Left colon (tissue), 2 donors: ENCODE measurements at regions of chr17 and their contacts with region 1.

Region 1: DNA sequence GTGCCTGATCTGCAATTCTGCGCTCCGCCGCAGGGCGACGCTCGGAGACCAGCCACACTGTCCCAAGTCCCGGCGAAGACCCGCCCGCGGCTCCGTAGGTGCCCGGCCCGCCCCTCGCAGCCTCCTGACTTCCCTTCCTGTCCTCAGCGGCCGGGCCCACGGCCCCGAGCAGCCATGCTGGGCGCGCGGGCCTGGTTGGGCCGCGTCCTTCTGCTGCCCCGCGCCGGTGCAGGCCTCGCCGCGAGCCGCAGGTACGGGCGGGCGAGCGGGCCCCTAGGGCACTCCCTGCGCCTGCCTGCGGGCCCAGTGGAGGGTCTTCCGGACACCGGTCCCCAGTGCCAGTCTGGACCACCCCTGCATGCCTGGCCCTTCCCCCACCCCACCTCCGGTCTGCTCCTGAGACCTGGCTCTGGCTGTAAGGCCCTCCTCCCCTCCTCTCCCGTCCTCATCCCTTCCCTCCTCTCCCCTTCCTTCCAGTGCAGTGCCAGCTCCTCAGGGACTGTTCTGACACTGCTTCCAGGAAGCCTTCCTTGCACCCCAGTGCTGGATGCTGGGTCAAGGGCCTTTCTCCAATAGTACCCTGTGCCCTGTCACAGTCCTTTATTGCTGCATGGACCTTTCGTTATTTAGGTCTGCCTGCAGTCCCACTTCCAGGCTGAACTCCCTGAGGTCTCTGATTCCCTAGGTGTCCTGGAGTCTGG is at the start of gene SPATA20:
- DNase-seq: peak; percentile 93 to 95
- ATAC-seq: peak; percentile 59
- total RNA-seq, gene SPATA20: 61.1 to 66.7 TPM

Region 2: DNA sequence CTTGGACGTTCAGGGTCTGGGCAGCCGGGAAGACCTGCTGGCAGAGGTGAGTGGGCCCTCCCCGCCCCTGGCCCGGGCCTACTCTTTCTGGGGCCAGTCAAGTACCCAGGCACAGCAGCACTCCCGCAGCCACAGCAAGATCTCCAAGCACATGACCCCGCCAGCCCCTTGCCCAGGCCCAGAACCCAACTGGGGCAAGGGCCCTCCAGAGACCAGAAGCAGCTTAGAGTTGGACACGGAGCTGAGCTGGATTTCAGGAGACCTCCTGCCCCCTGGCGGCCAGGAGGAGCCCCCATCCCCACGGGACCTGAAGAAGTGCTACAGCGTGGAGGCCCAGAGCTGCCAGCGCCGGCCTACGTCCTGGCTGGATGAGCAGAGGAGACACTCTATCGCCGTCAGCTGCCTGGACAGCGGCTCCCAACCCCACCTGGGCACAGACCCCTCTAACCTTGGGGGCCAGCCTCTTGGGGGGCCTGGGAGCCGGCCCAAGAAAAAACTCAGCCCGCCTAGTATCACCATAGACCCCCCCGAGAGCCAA is 78.9 kb after region 1 on chr17:
- intact Hi-C with region 1: loop called (anchors 5 kb)
- DNase-seq: peak in 1 of 2 donors; percentile 75
- ATAC-seq: no peak

Region 3: DNA sequence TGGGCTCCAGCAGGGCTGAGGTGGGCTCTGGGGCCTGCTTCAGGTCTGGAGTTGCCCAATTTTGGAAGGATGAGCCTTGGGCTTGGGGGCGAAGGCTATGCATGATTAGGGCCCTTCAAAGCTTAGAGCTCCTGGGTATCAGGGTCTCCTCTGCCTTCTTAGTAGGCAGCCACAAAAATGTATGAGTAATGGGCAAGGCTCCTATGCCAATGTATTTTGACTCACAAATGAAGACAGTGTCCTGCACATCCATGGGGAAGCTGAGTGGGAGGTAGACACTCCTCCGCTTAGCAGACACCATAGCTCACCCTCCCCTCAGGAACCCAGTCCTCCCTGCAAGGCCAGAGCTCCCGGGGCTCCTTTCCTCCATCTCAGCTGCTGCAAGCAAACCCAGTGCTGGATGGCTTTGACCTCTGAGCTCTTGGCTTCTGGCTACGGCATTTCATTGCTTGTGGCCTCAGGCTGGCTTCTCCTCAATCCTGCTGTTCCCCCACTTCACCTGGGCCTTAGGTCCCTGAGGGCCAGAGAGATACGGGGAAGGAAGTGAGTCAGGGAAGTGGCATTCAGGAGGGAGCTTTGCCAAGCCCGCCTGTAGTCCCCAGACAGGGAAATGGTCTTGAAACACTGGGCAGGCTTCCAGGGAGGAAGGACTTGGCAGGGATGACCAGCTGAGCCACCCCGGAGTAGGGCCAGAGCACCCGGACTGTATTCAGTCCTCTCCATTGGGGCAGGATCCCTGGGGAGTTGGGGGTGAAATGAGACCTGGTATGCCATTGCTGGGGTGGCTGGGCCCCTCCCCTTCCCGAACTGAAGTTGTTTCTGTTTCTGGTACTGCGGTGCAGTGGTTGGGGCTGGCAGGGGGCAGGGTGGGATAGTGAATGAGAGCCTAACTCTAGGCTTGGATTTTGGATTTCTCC is 91.9 kb after region 1 on chr17:
- intact Hi-C with region 1: loop called in 1 of 2 experiments (anchors 5 kb)
- DNase-seq: peak; percentile 95 to 98
- ATAC-seq: peak; percentile 69

Region 4: DNA sequence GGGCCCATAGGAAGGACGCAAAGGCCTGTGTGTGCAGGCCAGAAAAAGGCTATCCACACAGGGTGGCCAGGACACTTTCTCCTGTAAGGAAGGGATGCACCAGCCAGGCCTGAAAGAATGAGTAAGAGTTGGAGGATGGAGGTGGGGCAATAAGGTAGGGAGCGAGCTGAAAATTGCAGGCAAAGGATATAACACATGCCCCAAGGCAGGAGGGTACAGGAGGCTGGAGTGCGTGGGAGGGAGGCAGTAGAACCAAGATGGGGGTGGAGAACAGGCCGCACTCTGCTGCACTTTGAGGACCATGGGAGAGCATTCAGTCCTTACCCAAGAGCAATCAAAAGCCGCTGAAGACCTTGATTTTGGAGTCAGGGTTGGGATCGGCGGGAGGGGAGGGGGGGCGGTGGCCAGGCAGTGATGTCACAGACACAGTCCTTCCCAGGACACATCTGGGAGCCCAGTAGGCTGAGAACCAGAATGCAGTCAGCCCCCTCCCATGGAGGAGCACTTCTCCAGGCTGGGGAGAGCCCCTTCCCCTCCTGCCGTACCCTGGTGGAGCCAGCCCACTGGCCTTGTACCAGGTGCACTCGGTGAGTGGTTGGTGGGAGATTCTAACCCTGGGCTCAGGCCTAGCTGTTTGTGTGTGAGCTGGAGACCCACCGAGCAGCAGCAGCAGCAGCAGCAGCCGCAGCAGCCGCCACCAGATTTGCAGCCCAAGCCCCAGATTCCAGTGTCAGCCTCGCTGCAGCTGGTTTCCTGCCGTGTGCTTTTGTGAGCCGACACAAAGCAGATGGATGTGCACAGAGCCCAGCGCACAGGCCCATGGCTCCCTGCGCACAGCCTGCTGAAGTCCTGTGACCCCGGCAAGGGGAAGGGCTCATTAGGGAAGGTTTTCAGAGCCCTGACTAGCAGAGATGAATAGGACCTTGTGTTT is 143.0 kb after region 1 on chr17:
- intact Hi-C with region 1: loop called (anchors 5 to 10 kb)
- DNase-seq: no peak
- ATAC-seq: no peak

Region 5: DNA sequence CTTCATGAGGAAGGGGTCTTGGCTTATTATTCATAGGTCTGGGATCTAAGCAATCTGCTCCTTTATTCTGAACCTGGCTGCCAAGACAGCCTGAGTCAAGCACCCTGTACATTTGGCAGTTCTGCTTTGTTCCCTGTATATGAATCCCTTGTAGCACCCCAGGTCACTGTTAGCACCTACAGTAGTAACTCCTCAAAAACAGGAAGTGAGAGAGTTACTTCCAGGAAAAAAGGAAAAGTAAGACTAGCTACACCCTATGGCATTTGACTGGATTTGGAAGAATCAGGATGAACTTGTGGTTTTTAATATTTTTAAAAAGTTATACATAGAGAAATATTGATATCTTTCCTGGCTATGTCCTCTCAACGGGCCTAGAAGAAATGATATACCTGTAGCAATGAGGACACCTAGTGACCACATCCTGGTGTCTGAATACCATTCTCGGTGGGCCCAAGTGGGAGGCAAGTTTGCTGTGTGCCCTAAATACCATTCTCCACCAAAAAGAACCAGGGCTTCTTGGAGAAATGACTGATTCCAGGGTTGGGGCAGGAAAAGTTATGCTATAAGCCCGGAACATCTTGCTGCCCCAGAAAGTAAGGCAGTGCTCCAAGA is 150.6 kb after region 1 on chr17:
- intact Hi-C with region 1: loop called (anchors 5 to 10 kb)
- DNase-seq: no peak
- ATAC-seq: peak; percentile 16

Region 6: DNA sequence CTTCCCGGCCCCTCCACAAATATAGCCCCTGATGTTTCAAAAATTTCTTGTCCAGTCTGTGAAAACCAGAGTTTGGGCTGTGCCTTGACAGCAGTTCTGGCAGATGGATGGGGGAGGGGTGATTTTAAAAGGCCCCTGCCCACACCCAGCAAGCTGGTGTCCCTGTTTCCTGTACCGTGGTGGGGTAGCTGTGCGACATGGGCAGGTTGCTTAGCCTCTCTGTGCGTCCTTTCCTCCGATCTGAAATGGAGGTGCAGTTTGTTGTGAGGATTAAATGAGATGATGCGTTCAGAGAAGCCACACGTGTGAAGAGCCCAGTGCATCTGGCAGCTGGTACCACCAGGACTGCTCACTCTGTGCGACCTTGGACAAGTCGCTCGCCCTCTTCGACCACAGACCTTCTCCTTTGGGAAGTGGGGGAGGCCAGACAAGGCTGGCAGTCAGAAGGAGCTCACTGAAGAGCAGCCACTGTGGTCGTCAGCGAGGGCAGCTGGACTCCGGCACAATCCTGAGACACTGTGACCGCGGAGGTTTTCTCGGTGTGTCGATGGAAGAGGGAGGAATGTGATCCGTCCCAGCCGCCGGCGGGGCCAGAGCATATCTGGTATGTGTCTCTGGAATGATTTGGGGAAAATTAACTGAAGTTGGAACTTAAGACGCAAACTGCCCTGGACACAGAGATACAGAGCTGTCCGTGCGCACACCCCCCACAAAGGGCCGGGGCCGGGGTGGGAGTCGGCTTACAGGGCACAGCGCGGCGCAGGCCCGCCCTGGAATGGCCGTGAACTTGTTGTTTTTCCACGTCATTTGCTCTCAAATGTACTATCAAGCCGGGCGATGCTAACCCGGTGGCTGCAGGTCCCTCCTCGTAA is 287.5 kb after region 1 on chr17:
- intact Hi-C with region 1: loop called in 1 of 2 experiments (anchors 10 kb)
- DNase-seq: no peak
- ATAC-seq: peak; percentile 61

Region 7: DNA sequence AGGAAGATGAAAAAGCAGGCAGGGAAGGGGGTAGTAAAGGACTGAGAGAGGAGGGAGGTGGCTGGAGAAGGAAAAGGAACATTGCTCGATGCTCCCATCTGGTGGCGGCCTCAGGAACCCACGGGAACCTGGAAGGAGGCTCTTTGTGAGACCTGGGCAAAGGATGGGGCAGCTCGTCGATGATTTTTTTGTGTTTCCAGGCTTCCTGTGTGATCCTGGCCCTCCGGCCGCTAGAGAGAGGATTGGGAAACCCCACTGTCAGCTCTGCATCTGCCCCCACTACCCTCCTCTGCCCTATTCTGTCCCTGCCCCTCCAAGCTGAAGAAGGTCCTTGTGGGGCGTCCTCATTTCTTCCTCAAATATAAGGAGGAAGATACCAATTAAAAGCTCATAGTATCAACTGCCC is 294.8 kb after region 1 on chr17:
- intact Hi-C with region 1: loop called (anchors 10 kb)
- DNase-seq: peak; percentile 55 to 80
- ATAC-seq: peak; percentile 91